Activated B cell treated with CpG ODN at 0.5 μM for 24 hours (primary cell): ENCODE measurements at regions of chr17 and their contacts with region 1.

Region 1: DNA sequence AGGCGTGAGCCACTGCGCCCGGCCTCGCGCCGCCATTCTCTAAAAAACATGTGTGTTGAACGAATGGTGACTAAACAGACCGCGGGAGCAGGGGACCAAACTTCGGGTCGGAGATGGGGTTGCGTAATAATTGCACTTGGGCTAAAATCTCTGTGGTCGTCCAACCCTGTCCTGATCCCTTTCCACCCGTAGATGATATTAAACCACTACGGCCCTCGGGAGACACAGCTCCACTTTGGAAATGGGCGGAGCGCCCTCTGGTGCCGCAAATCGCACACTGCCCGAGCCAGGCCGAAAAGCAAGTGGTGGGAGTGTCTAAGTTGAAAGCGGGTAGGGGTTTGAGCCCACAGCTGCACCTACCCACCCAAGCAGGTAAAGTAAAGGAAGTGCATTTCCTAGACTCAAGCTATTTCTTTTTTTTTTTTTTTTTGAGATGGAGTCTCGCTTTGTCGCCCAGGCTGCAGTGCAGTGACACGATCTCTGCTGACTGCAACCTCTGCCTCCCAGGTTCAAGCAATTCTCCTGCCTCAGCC is 17.0 kb downstream of the CAVIN1 start:
- DNase-seq: peak; percentile 77
- ATAC-seq: peak; percentile 83
- H3K4me3 Mint-ChIP-seq: no peak overlapping the region
- H3K27ac Mint-ChIP-seq: no peak overlapping the region
- H3K4me1 Mint-ChIP-seq: peaks cover 8% of the 10 kb centered on the region
- H3K27me3 Mint-ChIP-seq: peaks cover 3% of the 10 kb centered on the region
- CTCF ChIP-seq: no peak

Region 2: GRCh38 chr17:42120770-42121769 is 285.0 kb before region 1 on chr17 and contains the start of gene KAT2A:
- CTCF ChIA-PET with region 1: no interaction called
- POLR2A ChIA-PET with region 1: no interaction called
- intact Hi-C with region 1: no loop called
- DNase-seq: peak; percentile 76
- ATAC-seq: peak; percentile 89
- H3K4me3 Mint-ChIP-seq: peak within 1 kb of the TSS; percentile 71
- H3K27ac Mint-ChIP-seq: peak within 1 kb of the TSS; percentile 30
- H3K4me1 Mint-ChIP-seq: peaks cover 32% of the 10 kb centered on the region
- H3K27me3 Mint-ChIP-seq: no peaks in the 10 kb centered on the region
- CTCF ChIP-seq: no peak
- total RNA-seq, gene KAT2A: 33.4 and 40.1 TPM in 2 replicates

Region 3: GRCh38 chr17:42221937-42222745 is 183.9 kb before region 1 on chr17:
- CTCF ChIA-PET with region 1: interaction called, 14 read pairs
- POLR2A ChIA-PET with region 1: no interaction called
- intact Hi-C with region 1: loop called (anchors 1 kb)
- DNase-seq: no peak
- ATAC-seq: peak; percentile 81
- H3K4me3 Mint-ChIP-seq: no peak overlapping the region
- H3K27ac Mint-ChIP-seq: no peak overlapping the region
- H3K4me1 Mint-ChIP-seq: no peaks in the 10 kb centered on the region
- H3K27me3 Mint-ChIP-seq: no peaks in the 10 kb centered on the region
- CTCF ChIP-seq: no peak

Region 4: GRCh38 chr17:42322382-42323267 is 83.4 kb before region 1 on chr17:
- CTCF ChIA-PET with region 1: interaction called, 202 read pairs
- POLR2A ChIA-PET with region 1: interaction called, 6 read pairs
- intact Hi-C with region 1: loop called (anchors 1 kb)
- DNase-seq: peak; percentile 80
- ATAC-seq: peak; percentile 97
- H3K4me3 Mint-ChIP-seq: no peak overlapping the region
- H3K27ac Mint-ChIP-seq: peak overlapping the region; percentile 63
- H3K4me1 Mint-ChIP-seq: peaks cover 35% of the 10 kb centered on the region
- H3K27me3 Mint-ChIP-seq: no peaks in the 10 kb centered on the region
- CTCF ChIP-seq: peak; percentile 90

Region 5: GRCh38 chr17:42361781-42362186 is 44.2 kb before region 1 on chr17:
- CTCF ChIA-PET with region 1: interaction called, 5 read pairs
- POLR2A ChIA-PET with region 1: no interaction called
- intact Hi-C with region 1: loop called (anchors 5 kb)
- DNase-seq: no peak
- ATAC-seq: peak; percentile 58
- H3K4me3 Mint-ChIP-seq: no peak overlapping the region
- H3K27ac Mint-ChIP-seq: no peak overlapping the region
- H3K4me1 Mint-ChIP-seq: peaks cover 69% of the 10 kb centered on the region
- H3K27me3 Mint-ChIP-seq: no peaks in the 10 kb centered on the region
- CTCF ChIP-seq: no peak

Region 6: DNA sequence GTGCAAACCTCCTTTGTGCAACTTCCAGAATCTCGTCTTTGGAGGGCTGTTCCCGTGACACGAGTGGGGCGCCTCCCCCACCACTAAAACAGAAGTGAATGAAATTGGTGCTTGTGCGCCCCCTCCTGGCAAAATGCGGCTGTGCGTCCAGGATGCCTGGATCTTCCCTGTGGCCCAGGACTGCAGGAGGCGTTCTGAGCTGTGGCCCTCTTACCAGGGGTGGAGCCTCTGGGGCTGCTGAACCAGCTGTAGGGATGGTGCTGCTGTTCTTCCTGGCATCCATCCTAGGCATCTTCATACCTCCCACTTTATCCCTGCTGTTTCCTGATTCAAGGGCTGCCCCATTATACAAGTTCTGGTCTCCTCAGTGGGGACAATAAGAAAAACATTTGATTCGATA is 111.5 kb after region 1 on chr17:
- CTCF ChIA-PET with region 1: interaction called, 3 read pairs
- POLR2A ChIA-PET with region 1: no interaction called
- intact Hi-C with region 1: loop called (anchors 1 kb)
- DNase-seq: peak; percentile 75
- ATAC-seq: peak; percentile 92
- H3K4me3 Mint-ChIP-seq: no peak overlapping the region
- H3K27ac Mint-ChIP-seq: no peak overlapping the region
- H3K4me1 Mint-ChIP-seq: peaks cover 7% of the 10 kb centered on the region
- H3K27me3 Mint-ChIP-seq: no peaks in the 10 kb centered on the region
- CTCF ChIP-seq: peak; percentile 64

Region 7: GRCh38 chr17:42548070-42548837 is 142.2 kb after region 1 on chr17:
- CTCF ChIA-PET with region 1: no interaction called
- POLR2A ChIA-PET with region 1: no interaction called
- intact Hi-C with region 1: no loop called
- DNase-seq: peak; percentile 81
- ATAC-seq: peak; percentile 97
- H3K4me3 Mint-ChIP-seq: peak overlapping the region; percentile 66
- H3K27ac Mint-ChIP-seq: no peak overlapping the region
- H3K4me1 Mint-ChIP-seq: peaks cover 17% of the 10 kb centered on the region
- H3K27me3 Mint-ChIP-seq: no peaks in the 10 kb centered on the region
- CTCF ChIP-seq: no peak

Region 8: DNA sequence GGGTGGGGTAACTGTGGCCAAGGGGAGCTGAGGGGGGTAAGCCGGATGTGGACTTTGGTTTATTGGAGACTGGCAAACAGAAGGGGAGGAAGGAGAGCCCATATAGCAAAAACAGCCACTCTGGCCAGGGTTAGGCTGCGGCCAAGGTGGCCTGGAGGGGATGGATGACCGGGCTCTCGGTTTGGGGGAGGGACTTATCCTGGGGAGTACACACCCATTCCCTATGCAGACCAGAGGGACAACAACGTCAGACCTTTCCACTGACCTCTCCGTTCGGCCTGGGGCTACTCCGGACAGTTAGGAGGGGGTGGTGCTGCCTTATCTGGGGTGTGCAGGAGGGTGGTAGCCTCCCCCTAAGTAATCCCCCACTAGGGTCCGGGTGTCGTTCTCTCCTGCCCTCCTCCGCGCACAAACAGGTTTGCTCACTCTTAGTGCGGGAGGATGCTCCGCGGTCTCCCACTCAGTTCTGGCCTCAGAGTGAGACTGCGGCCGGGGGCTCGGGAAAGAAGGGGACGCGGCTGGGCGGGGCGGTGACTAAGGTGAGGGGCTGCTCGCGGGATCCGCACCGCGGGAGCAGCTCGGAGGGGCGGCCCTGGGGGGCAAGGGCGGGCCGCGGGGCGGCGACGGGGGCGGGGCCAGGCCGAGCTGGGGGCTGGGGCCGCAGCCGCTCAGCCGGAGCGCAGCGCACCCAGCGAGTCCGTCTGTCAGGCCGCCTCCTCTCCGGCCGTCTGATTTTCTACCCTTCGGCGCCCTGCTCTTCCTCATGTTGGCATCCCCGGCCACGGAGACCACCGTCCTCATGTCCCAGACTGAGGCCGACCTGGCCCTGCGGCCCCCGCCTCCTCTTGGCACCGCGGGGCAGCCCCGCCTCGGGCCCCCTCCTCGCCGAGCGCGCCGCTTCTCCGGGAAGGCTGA is 374.2 kb after region 1 on chr17 and contains the start of gene WNK4:
- CTCF ChIA-PET with region 1: no interaction called
- POLR2A ChIA-PET with region 1: no interaction called
- intact Hi-C with region 1: no loop called
- DNase-seq: no peak
- ATAC-seq: peak; percentile 40
- H3K4me3 Mint-ChIP-seq: peak within 1 kb of the TSS; percentile 15
- H3K27ac Mint-ChIP-seq: no peak within 1 kb of the TSS
- H3K4me1 Mint-ChIP-seq: peaks cover 27% of the 10 kb centered on the region
- H3K27me3 Mint-ChIP-seq: peaks cover 34% of the 10 kb centered on the region
- CTCF ChIP-seq: no peak
- total RNA-seq, gene WNK4: 0.10 and 0.29 TPM in 2 replicates